ENCODE measurements at regions of chr5 and their contacts with region 1.

Region 1: GRCh38 chr5:146426853-146427618 is 20.1 kb upstream of the TCERG1 start:
- DNase-seq: no peak

Region 2: GRCh38 chr5:146291421-146292074 is 135.5 kb before region 1 on chr5:
- intact Hi-C with region 1: loop called (anchors 2 kb)
- DNase-seq: no peak

Region 3: DNA sequence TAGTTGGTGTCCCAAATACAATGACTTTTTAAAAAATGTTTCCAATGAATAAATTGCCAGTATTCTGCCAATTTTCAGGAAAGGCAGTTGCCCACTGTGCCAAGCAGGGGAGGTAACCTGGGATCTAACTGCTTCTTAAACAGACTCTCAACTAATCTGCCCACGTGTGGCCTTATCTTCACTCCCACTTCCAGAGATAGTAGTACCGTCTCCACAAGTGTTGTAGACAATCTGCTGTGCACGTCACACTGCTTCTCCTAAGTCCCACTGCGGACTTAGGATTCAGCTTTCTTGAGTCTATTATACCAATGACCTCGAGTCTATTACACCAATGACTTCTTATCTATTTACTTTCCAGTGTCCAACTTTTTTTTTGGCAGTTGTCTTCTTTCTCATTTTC is 67.2 kb before region 1 on chr5:
- intact Hi-C with region 1: no loop called
- DNase-seq: no peak

Region 4: GRCh38 chr5:146565764-146566367 is 138.8 kb after region 1 on chr5:
- intact Hi-C with region 1: no loop called
- DNase-seq: peak in 9 of 10 donors; percentile 15 to 91 (median 57)

Region 5: GRCh38 chr5:146722361-146722791 is 295.3 kb after region 1 on chr5:
- intact Hi-C with region 1: no loop called
- DNase-seq: no peak

Measured in posterior cingulate gyrus (tissue), 11 donors.